Dendritic cell treated with granulocyte-macrophage colony-stimulating factor and Interleukin-4, amounts not matched to agents 40 ng/mL and 50 ng/mL, for 4 days (primary cell): ENCODE measurements at regions of chr12 and their contacts with region 1.

Region 1: DNA sequence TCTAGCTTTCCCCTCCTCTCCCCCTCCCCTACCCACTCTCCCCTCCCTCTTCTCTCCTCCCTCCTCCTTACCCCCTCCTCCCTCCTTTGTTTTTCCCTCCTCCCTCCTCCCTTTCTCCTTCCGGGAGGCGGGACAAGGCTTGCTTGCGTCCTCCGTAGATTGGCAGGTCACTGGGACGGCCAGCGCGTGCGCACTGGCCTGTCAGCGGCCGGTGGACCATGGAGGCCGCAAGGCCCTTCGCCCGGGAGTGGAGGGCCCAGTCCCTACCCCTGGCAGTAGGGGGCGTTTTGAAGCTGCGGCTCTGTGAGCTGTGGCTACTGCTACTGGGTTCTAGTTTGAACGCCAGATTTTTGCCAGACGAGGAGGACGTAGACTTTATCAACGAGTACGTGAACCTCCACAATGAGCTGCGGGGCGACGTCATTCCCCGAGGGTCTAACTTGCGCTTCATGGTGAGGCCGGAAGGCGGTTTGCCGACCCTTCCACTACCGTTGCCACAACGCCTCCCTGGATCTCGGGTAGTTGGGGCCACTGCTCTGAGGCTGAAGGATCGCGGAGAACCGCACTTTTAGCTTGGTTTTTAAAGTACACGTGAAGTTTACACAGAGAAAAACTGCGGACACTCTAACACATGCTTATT is at the start of gene GLIPR1L2:
- H3K4me3 Mint-ChIP-seq: peak within 1 kb of the TSS; percentile 83
- H3K27ac Mint-ChIP-seq: peak within 1 kb of the TSS; percentile 97
- H3K4me1 Mint-ChIP-seq: peaks cover 35% of the 10 kb centered on the region
- H3K27me3 Mint-ChIP-seq: no peaks in the 10 kb centered on the region

Region 2: GRCh38 chr12:75334384-75335030 is 56.5 kb before region 1 on chr12 and contains the start of gene GLIPR1L1:
- intact Hi-C with region 1: loop called (anchors 5 kb)
- H3K4me3 Mint-ChIP-seq: peak within 1 kb of the TSS; percentile 58
- H3K27ac Mint-ChIP-seq: no peak within 1 kb of the TSS
- H3K4me1 Mint-ChIP-seq: peaks cover 13% of the 10 kb centered on the region
- H3K27me3 Mint-ChIP-seq: peaks cover 5% of the 10 kb centered on the region

Region 3: DNA sequence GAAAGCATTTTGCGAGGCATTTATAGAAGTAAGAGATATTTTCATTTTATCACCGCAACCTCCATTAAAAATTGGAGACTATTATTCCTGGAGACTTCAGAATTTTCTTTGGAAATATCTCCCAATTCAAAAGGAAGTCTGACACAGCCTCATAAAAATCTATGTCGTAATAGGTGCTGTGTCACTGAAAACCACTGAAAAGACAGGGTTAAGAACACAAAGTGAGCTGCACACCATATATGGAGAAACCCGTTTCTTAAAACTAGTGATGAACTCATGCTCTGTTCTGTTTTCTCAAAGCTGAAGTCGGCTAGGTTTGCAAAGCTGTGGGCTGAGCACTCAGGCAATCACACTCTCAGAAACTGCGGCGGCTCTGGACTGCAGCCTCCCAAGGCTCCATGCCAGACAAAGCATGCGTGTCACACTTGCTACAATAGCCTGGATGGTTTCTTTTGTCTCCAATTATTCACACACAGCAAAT is 89.5 kb after region 1 on chr12 and contains the start of gene GLIPR1:
- intact Hi-C with region 1: loop called (anchors 2 kb)
- H3K4me3 Mint-ChIP-seq: peak within 1 kb of the TSS; percentile 84
- H3K27ac Mint-ChIP-seq: peak within 1 kb of the TSS; percentile 88
- H3K4me1 Mint-ChIP-seq: peaks cover 45% of the 10 kb centered on the region
- H3K27me3 Mint-ChIP-seq: no peaks in the 10 kb centered on the region

Region 4: DNA sequence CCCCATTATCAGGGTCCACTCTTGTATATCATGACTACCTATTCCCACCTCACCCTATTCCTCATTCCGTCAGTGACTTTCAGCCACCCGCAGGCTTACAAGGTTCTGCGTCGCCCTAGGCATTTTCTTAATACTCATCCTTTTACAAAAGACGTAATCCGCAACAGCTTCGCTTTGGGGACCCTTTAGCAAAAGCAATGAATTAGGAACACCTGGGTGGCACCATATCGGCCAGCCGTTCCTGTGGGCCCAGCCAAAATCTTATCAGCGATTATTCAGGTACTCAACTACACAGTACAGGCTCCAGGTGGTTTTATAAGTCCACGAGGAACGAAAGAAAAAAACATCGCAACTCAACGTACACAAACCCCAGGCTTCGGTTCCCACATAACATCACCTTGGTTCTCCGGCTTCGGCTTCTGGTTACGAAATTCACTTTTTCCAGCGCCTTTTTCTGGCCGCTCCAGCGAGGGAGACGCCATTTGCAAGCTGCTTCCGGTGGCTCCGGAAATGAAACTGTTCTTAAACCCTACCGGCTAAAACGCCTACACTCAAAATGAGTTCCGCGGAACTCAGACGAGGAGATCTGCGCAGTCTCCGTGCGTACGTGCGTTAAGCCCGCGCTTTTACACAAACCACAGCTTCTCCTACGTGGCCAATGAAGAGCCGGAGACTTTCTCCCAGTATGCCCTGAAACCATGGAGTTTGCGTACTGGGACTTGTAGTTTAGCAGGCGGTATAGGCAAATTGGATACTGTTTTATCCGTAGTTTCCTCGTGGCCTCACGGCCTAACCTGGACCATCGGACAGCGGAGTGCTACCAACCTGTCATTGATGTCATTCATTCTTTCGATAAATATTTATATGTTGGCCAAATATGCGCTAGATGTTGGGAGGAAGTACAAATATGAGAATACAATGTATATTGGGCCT is 120.4 kb after region 1 on chr12 and contains the start of gene KRR1:
- intact Hi-C with region 1: loop called (anchors 1 kb)
- H3K4me3 Mint-ChIP-seq: peak within 1 kb of the TSS; percentile 94
- H3K27ac Mint-ChIP-seq: peak within 1 kb of the TSS; percentile 96
- H3K4me1 Mint-ChIP-seq: peaks cover 15% of the 10 kb centered on the region
- H3K27me3 Mint-ChIP-seq: peaks cover 1% of the 10 kb centered on the region